ENCODE measurements at regions of chr10 and their contacts with region 1.

Region 1: DNA sequence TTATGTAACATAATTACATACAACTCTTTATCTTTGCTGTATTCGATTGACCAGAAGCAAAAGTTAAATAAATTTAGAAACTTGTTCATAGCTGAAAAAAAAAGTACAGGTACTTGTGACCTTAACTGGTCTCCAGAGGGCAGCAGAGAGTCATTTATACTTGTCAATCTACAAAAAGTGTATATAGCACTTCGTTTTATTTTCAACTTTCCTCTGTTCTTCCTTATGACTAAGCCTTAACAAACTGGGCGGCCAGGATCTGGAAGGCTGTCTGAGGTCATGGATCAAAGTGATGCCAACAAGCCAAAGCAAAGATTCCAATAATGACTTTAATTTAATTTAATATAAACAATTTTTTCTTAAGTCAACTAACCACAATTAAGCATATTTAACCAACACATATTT is 29.8 kb downstream of the C10orf67 start:
- DNase-seq: peak; percentile 91
- H3K4me3 ChIP-seq: no peak overlapping the region
- H3K27ac ChIP-seq: no peak overlapping the region
- H3K4me1 ChIP-seq: 0 out of 2 replicates have a peak, but pooled peaks cover 4% of the 10 kb centered on the region
- H3K27me3 ChIP-seq: 0 out of 2 replicates have a peak, but pooled peaks cover 3% of the 10 kb centered on the region

Region 2: DNA sequence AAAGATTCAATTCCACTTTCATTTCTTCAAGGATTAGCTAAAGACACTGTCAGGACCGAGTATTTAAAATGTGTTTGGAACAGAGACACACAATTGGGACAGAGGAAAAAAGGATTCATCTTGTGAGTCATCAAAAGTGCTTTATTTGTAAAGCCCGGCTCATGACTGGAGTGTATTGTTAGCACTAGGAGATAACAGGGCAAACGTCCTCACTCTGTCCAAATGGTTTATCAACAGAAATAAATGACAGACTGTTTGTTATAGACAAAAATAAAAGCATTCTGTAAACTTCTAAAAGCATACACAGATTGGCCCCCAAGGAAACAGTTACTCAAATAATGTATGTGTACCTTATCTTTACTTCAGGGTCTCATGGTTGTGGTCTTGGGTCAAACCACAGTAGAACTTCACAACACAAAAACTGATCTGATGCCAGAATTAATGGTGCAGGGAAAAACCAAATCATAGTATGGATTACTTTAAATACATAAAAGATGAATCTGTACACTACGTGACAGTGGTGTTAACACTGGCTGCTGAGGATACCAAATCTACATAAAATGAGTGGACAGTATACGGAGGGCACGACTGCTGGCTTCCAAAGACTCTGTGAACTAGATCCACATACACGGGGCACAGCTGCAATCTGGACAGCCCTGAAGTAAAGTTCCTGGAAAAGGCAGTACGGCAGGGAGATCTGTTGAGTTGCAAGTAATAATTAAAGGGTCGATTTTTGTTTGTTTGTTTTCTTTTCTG is 779.8 kb before region 1 on chr10:
- in situ Hi-C with region 1: no loop called
- DNase-seq: peak; percentile 52
- H3K4me3 ChIP-seq: no peak overlapping the region
- H3K27ac ChIP-seq: no peak overlapping the region
- H3K4me1 ChIP-seq: no peaks in the 10 kb centered on the region
- H3K27me3 ChIP-seq: no peaks in the 10 kb centered on the region

Region 3: DNA sequence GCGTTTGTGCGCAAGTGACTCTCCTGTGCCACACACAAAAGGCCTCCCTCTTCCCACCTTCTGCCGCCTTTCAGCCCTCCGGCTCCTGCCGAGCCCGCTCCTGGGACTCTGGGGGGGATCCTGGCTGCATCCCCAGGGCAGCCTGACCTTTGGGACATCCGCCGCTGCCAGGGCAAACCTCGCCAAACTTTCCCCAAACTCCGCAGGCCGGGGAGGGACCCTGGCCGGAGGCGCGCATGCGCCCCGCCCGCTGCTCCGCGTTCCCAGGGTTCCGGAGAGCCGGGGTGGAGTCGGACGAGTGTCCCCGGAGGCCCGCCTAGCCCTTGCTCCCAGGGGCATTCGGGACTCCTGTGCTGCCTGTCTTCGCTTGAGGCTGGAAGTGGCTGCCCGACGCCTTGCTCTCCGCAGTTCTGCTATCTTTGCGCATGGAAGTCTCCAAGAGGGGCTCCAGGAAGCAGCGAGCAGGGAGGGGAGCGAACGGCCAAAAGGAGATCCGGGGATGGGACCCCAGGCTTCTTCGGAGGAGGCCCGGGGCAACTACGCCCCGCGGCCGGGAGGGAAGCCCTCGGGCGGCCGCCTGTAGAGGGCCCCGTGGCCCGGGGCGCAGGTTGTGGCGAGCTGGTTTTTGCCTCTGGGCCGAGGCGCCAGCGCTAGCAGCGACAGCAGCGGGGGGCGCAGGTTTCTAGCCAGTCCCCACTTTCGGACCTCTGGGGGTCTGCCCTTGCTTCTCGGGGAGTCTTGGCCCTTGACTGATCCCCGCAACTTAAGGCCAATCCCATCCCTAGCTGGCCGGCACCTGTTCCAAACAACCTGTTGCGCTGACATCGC is 115.7 kb before region 1 on chr10:
- in situ Hi-C with region 1: no loop called
- DNase-seq: no peak
- H3K4me3 ChIP-seq: no peak overlapping the region
- H3K27ac ChIP-seq: no peak overlapping the region
- H3K4me1 ChIP-seq: no peaks in the 10 kb centered on the region
- H3K27me3 ChIP-seq: peaks cover 89% of the 10 kb centered on the region

Region 4: DNA sequence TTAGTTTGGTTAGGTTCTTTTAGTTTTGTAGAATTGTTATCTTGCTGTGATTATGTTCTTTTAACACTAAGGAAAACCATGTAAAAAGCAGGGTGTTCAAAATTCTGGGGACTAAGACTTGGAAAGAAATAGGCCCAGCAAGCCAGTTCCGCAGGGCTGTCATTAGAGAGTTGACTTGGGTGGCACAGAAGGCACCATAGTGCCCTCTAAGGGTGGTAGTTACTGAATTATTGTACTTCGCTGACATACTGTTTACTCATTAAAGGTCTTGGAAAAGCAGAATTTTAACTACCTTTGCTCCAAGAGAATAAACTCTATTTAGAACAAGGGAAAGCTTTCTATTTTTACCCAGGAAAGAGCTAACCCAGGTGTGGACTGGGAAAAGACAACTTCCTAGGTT is 210.6 kb after region 1 on chr10:
- in situ Hi-C with region 1: loop called (anchors 10 kb)
- DNase-seq: peak; percentile 40
- H3K4me3 ChIP-seq: no peak overlapping the region
- H3K27ac ChIP-seq: no peak overlapping the region
- H3K4me1 ChIP-seq: no peaks in the 10 kb centered on the region
- H3K27me3 ChIP-seq: no peaks in the 10 kb centered on the region; the same call in 1 of the 2 replicates

Region 5: GRCh38 chr10:23694446-23694920 is 379.6 kb after region 1 on chr10:
- in situ Hi-C with region 1: loop called (anchors 25 kb)
- DNase-seq: no peak
- H3K4me3 ChIP-seq: no peak overlapping the region
- H3K27ac ChIP-seq: no peak overlapping the region
- H3K4me1 ChIP-seq: no peaks in the 10 kb centered on the region
- H3K27me3 ChIP-seq: peaks cover 53% of the 10 kb centered on the region